ENCODE measurements at regions of chr20 and their contacts with region 1.

Region 1: GRCh38 chr20:3820048-3820900 is at the start of gene AP5S1:
- DNase-seq: peak; percentile 71 to 95 (median 84)
- ATAC-seq: peak; percentile 84
- H3K4me3 ChIP-seq: peak within 1 kb of the TSS; percentile 92
- H3K4me3 Mint-ChIP-seq: peak within 1 kb of the TSS; percentile 94
- H3K27ac ChIP-seq: peak within 1 kb of the TSS; percentile 93 to 99
- H3K27ac Mint-ChIP-seq: peak within 1 kb of the TSS; percentile 99
- H3K4me1 ChIP-seq: peaks cover 54% of the 10 kb centered on the region
- H3K4me1 Mint-ChIP-seq: peaks cover 48% of the 10 kb centered on the region
- H3K27me3 ChIP-seq: no peaks in the 10 kb centered on the region
- H3K27me3 Mint-ChIP-seq: no peaks in the 10 kb centered on the region
- CTCF ChIP-seq: peak; percentile 89
- total RNA-seq, gene AP5S1: 6.0 TPM

Region 2: GRCh38 chr20:3753098-3753980 is 66.9 kb before region 1 on chr20:
- CTCF ChIA-PET with region 1: interaction called, 5 read pairs
- POLR2A ChIA-PET with region 1: interaction called, 6 read pairs
- intact Hi-C with region 1: loop called in 1 of 2 experiments (anchors 2 kb)
- DNase-seq: peak; percentile 45 to 83 (median 56)
- ATAC-seq: peak; percentile 64
- H3K4me3 ChIP-seq: no peak overlapping the region
- H3K4me3 Mint-ChIP-seq: peak overlapping the region; percentile 92
- H3K27ac ChIP-seq: no peak overlapping the region
- H3K27ac Mint-ChIP-seq: peak overlapping the region; percentile 70
- H3K4me1 ChIP-seq: peaks cover 13% of the 10 kb centered on the region
- H3K4me1 Mint-ChIP-seq: peaks cover 14% of the 10 kb centered on the region
- H3K27me3 ChIP-seq: peaks cover 0 to 7% of the 10 kb centered on the region in 2 experiments
- H3K27me3 Mint-ChIP-seq: no peaks in the 10 kb centered on the region
- CTCF ChIP-seq: peak; percentile 60

Region 3: GRCh38 chr20:3781153-3781910 is 38.9 kb before region 1 on chr20 and contains the start of gene SPEF1:
- CTCF ChIA-PET with region 1: interaction called, 59 read pairs
- POLR2A ChIA-PET with region 1: interaction called, 89 read pairs
- intact Hi-C with region 1: loop called in 1 of 2 experiments (anchors 1 kb)
- DNase-seq: peak in 5 of 14 experiments; percentile 29 to 84 (median 80)
- ATAC-seq: peak; percentile 40
- H3K4me3 ChIP-seq: peak within 1 kb of the TSS; percentile 47
- H3K4me3 Mint-ChIP-seq: peak within 1 kb of the TSS; percentile 40
- H3K27ac ChIP-seq: no peak within 1 kb of the TSS
- H3K27ac Mint-ChIP-seq: peak within 1 kb of the TSS; percentile 43
- H3K4me1 ChIP-seq: peaks cover 53% of the 10 kb centered on the region
- H3K4me1 Mint-ChIP-seq: peaks cover 48% of the 10 kb centered on the region
- H3K27me3 ChIP-seq: peaks cover 9 to 12% of the 10 kb centered on the region in 2 experiments
- H3K27me3 Mint-ChIP-seq: peaks cover 14% of the 10 kb centered on the region
- CTCF ChIP-seq: no peak
- total RNA-seq, gene SPEF1: not detected

Region 4: DNA sequence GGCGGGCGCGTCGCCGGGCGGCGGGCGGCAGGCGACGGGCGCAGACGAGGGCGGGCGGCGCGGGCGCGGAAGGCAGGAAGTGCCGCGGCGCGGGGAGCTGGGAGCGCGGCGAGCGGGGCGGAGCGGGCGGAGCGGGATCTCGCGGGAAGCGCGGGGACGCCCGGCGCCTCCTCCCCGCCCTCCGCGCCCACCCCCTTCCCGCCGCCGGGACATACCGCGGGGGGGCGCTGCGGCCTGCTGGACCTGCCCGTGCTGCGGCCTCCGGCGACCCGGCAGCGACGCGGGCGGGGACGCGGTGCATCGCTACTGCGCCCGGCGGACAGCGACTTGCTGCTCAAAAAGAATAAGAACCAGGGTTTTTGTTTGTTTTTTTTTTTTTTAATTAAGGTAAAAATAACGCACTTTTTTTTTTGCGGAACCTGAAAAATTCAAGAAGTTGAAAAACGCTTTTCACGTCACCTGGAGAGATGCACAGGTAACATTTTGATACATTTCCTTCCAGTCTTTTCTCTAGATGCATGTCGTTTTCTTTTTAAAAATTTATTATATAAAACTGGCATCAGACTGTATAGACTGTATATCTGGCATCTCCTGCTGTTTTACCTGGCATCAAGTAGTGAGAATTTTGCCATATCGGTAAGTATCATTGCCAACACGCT is 33.5 kb before region 1 on chr20 and contains the start of gene CENPB:
- CTCF ChIA-PET with region 1: interaction called, 59 read pairs
- POLR2A ChIA-PET with region 1: interaction called, 89 read pairs
- intact Hi-C with region 1: loop called (anchors 1 kb)
- DNase-seq: peak; percentile 70 to 95 (median 90)
- ATAC-seq: peak; percentile 83
- H3K4me3 ChIP-seq: peak within 1 kb of the TSS; percentile 63
- H3K4me3 Mint-ChIP-seq: peak within 1 kb of the TSS; percentile 85
- H3K27ac ChIP-seq: peak within 1 kb of the TSS; percentile 66 to 70
- H3K27ac Mint-ChIP-seq: peak within 1 kb of the TSS; percentile 73
- H3K4me1 ChIP-seq: peaks cover 32% of the 10 kb centered on the region
- H3K4me1 Mint-ChIP-seq: peaks cover 40% of the 10 kb centered on the region
- H3K27me3 ChIP-seq: no peaks in the 10 kb centered on the region
- H3K27me3 Mint-ChIP-seq: no peaks in the 10 kb centered on the region
- CTCF ChIP-seq: peak; percentile 80
- total RNA-seq, gene CENPB: 25.1 to 25.3 TPM

Region 5: GRCh38 chr20:3795511-3796468 is 24.5 kb before region 1 on chr20 and contains the start of gene CDC25B:
- CTCF ChIA-PET with region 1: interaction called, 32 read pairs
- POLR2A ChIA-PET with region 1: interaction called, 89 read pairs
- intact Hi-C with region 1: loop called in 1 of 2 experiments (anchors 1 kb)
- DNase-seq: peak; percentile 82 to 95 (median 89)
- ATAC-seq: peak; percentile 81
- H3K4me3 ChIP-seq: peak within 1 kb of the TSS; percentile 96
- H3K4me3 Mint-ChIP-seq: peak within 1 kb of the TSS; percentile 100
- H3K27ac ChIP-seq: peak within 1 kb of the TSS; percentile 90 to 95
- H3K27ac Mint-ChIP-seq: peak within 1 kb of the TSS; percentile 95
- H3K4me1 ChIP-seq: peaks cover 50% of the 10 kb centered on the region
- H3K4me1 Mint-ChIP-seq: peaks cover 45% of the 10 kb centered on the region
- H3K27me3 ChIP-seq: no peaks in the 10 kb centered on the region
- H3K27me3 Mint-ChIP-seq: no peaks in the 10 kb centered on the region
- CTCF ChIP-seq: peak; percentile 58
- total RNA-seq, gene CDC25B: 144 TPM

Region 6: DNA sequence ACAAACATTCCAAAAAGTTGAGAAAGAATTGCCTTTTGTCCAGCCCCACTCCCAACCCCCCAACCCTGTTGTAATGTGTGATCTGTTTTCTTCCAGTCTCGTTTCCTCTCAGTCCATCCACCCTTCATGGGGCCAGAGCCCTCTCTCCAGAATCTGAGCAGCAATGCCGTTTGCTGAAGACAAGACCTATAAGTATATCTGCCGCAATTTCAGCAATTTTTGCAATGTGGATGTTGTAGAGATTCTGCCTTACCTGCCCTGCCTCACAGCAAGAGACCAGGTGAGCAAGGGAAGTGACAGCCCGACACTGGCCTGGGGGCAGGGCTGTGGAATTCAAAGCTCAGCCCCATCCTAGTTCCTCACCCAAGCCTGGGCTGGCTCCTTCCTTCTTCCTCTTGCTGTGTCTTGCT is 34.2 kb after region 1 on chr20:
- CTCF ChIA-PET with region 1: interaction called, 16 read pairs
- POLR2A ChIA-PET with region 1: interaction called, 10 read pairs
- intact Hi-C with region 1: loop called (anchors 5 kb)
- DNase-seq: no peak
- ATAC-seq: no peak
- H3K4me3 ChIP-seq: no peak overlapping the region
- H3K4me3 Mint-ChIP-seq: no peak overlapping the region
- H3K27ac ChIP-seq: no peak overlapping the region
- H3K27ac Mint-ChIP-seq: no peak overlapping the region
- H3K4me1 ChIP-seq: peaks cover 9% of the 10 kb centered on the region
- H3K4me1 Mint-ChIP-seq: peaks cover 13% of the 10 kb centered on the region
- H3K27me3 ChIP-seq: no peaks in the 10 kb centered on the region
- H3K27me3 Mint-ChIP-seq: no peaks in the 10 kb centered on the region
- CTCF ChIP-seq: no peak